Colonic mucosa (tissue), 4 donors: ENCODE measurements at regions of chr22 and their contacts with region 1.

Region 1: DNA sequence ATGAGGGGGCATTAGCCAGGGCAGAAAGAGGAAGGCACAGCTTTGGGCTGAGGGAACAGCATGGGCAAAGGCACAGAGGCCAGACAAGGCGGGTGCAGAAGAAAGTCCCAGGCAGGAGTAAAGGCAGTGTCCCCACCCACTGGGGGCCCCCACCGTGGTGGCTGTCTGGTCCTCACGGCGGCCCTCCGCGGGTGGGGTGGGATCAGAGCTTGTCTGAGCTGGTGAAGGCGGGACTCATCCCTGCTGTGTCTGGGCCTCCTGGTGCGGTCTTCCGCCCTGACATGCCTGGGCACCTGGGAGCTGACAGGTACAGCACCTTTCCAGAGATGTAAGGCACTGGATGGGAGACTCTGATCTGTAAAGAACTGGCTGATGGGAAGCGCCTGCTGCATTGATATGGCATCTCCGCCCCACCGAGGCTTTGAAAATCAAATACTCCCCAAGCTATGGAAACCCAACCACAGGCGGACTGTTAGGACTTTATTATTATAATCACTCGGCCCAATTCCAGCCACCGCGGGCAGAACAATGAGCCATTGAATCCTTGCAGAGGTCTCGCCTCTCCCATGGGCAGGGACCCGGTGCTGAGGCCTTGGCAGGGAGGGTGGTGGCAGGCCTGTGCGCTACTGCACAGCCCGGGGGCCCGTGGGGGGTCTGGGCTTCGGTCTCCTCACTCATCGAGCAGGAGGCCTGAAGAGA is 14.2 kb upstream of the GNB1L start:
- DNase-seq: peak; percentile 67
- H3K4me3 ChIP-seq: no peak overlapping the region
- H3K27ac ChIP-seq: no peak overlapping the region
- H3K4me1 ChIP-seq: peaks cover 7% of the 10 kb centered on the region
- H3K27me3 ChIP-seq: no peaks in the 10 kb centered on the region
- CTCF ChIP-seq: no peak

Region 2: GRCh38 chr22:19806213-19807145 is 62.4 kb before region 1 on chr22:
- intact Hi-C with region 1: no loop called
- DNase-seq: peak; percentile 92
- H3K4me3 ChIP-seq: no peak overlapping the region
- H3K27ac ChIP-seq: no peak overlapping the region
- H3K4me1 ChIP-seq: peaks cover 3% of the 10 kb centered on the region
- H3K27me3 ChIP-seq: no peaks in the 10 kb centered on the region
- CTCF ChIP-seq: no peak

Region 3: GRCh38 chr22:19932367-19933206 is 63.7 kb after region 1 on chr22:
- intact Hi-C with region 1: loop called (anchors 10 kb)
- DNase-seq: no peak
- H3K4me3 ChIP-seq: no peak overlapping the region
- H3K27ac ChIP-seq: no peak overlapping the region
- H3K4me1 ChIP-seq: no peaks in the 10 kb centered on the region
- H3K27me3 ChIP-seq: no peaks in the 10 kb centered on the region
- CTCF ChIP-seq: no peak

Region 4: GRCh38 chr22:19995626-19996335 is 126.9 kb after region 1 on chr22:
- intact Hi-C with region 1: no loop called
- DNase-seq: no peak
- H3K4me3 ChIP-seq: no peak overlapping the region
- H3K27ac ChIP-seq: no peak overlapping the region
- H3K4me1 ChIP-seq: no peaks in the 10 kb centered on the region
- H3K27me3 ChIP-seq: no peaks in the 10 kb centered on the region
- CTCF ChIP-seq: no peak

Region 5: DNA sequence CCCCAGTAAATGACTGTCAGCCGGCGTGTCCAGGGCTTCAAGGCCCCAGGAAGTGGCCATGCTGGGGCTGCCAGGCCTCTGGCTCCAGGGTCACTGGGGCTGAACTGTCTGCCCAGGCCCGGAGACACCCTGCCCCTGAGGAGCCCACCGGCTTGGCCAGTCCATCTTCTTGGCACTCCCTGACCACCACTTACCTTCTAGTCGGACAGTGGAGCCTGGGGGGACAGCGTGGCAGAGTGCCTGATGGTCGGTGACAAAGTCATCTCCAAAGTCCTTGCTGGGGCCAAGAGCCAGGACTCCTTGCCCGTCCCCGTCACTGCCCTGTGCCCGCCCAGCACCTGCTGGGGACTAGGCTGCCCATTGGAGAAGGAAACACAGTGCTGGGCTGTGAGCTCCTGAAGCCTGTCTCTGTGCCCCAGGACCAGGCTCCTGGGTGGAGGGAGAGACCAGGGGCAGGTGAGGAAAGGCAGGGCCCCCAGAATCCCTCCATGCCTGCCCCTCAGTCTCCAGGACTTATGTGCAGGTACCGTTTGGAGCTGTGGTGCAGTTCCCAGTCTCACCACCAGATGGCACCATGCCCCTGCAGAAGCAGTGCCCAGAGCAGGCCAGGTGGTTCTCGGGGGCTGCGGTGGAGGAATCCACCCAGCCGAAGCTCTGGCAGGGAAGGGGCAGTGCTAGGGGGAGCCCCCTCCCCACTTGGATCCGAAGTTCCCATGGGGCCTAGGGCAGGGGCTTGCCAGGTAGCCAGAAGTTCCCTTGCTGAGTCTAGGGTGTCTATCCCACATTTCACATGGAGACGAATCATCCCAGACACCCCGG is 287.9 kb after region 1 on chr22:
- intact Hi-C with region 1: no loop called
- DNase-seq: peak; percentile 86
- H3K4me3 ChIP-seq: no peak overlapping the region
- H3K27ac ChIP-seq: no peak overlapping the region
- H3K4me1 ChIP-seq: no peaks in the 10 kb centered on the region
- H3K27me3 ChIP-seq: no peaks in the 10 kb centered on the region
- CTCF ChIP-seq: peak; percentile 100